Cardiac septum (tissue), 1 donor: ENCODE measurements at regions of chr2 and their contacts with region 1.

Region 1: DNA sequence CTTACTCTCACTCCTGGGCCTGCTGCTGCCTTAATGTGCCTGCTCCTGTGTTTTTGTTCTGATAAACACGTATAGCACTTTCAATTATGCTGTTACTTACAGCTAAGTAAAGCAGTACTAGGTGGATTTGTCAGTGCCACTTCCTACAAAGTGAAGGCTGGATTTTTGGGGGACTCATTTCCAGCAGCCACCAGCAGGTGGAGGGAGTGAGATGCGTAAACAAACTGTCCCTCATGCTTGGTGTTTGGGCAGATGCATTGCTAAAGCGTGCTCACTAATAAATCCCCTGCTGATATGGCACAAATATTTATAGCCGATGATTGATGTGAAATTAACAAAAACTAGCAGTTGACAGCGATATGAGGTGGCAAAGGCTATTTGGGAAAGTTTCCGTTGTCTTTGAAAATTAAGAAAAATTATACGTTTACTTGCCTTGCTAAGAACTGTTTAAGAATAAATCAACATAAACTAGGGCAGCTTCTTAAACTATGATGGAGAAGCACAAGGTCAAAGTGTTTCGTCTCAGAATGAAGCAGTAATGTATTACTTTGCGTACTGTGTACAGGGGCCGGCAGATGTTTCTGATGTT is 101.7 kb downstream of the AGAP1 start:
- DNase-seq: no peak

Region 2: GRCh38 chr2:234544659-234545611 is 1050.6 kb before region 1 on chr2:
- intact Hi-C with region 1: loop called (anchors 10 kb)
- DNase-seq: peak; percentile 79

Region 3: DNA sequence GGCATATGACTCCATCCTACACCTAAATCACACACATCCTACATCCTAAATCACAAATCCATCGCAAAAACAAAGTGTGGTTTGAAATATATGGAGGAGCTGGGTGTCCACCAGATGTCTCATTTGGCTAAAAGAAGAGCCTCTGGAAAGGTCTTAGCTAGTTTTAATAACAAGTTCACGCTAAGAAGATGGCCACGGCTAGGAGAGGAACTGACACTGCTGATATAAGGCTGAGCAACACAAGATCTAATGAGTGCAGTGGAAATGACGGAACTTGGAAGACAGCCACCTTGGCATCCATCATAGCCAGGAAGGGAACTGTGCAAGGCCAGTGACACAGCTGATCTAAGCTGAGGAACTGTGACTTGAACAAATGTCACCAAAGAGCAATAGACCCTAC is 161.7 kb before region 1 on chr2:
- intact Hi-C with region 1: loop called (anchors 5 kb)
- DNase-seq: no peak

Region 4: GRCh38 chr2:235669269-235669831 is 73.8 kb after region 1 on chr2:
- intact Hi-C with region 1: loop called (anchors 1 kb)
- DNase-seq: peak; percentile 77

Region 5: GRCh38 chr2:235746257-235747084 is 151.0 kb after region 1 on chr2:
- intact Hi-C with region 1: loop called (anchors 1 kb)
- DNase-seq: no peak